Motor neuron (in vitro differentiated cells): ENCODE measurements at regions of chrX and their contacts with region 1.

Region 1: DNA sequence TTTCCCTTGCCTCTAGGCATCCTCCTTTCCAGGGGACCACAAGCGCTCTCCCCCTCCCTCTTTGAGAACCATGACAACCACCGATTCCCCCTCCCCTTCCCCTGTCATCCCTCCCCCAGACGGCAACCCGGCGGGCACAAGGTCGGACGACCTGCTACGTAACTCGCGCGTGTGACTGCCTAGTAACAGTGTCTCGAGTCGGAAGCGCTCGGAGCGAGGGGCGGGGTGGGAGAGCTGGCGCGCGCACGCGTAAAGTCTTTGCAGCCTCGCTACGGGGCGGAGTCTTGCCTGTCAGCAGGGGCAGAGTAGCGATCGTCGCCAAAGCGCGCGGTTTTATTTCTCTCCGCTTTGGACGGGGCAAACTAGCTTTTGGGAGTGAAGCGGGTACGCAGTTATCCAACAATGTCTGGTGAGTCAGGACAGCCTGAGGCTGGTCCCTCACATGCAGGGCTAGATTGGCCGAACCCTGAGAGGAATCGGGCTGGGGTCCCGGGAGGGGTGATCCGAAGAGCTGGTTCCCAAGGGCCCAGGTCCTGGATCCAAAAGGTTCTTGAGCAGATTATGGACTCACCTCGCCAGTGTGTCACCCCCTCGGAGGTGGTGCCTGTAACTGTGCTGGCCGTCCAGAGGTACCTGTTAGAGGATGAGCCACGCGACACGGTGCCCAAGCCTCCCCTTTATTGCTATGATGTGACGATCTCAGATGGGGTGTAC is at the start of gene RADX:
- ATAC-seq: peak; percentile 90 to 97 (median 96)
- H3K4me3 ChIP-seq: peak within 1 kb of the TSS; percentile 46 to 68 (median 55)
- H3K27ac ChIP-seq: no peak within 1 kb of the TSS
- H3K4me1 ChIP-seq: no peaks in the 10 kb centered on the region
- total RNA-seq, gene RADX: 5.8 to 173 (median 12.7) TPM

Region 2: DNA sequence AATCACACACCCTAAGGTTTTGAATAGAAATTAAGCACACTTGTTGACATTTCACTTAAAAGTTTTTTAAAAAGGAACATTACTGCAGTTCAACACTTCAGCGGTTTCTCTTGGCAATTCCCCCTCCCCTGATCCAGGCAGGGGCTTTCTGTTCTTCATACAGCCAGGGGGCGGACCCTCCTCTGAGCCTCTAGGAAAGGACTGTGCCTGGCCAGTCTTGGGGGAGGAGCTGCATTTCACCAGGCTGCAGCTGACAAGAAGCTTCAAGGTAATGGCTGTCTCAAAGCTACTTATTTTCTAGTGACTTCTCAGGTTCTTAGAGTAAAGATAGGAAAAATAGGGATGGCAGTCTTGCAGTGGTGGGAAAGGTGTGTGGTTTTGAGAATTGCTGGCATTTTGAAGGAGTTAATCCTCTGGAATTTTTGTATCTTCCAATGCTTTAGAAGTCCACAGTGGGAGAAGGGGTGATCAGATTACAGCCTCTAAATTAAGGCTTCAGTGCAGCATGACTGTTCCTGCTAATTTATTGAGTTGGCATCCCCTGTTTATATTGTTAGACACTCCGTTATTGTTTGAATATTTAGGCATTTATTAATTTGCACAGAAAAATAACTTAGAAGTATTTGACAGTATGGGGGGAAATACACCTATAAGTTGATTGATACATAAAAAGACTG is 410.2 kb before region 1 on chrX:
- in situ Hi-C with region 1: no loop called
- ATAC-seq: peak in 4 of 8 experiments; percentile 40 to 64 (median 56)
- H3K4me3 ChIP-seq: no peak overlapping the region
- H3K27ac ChIP-seq: no peak overlapping the region
- H3K4me1 ChIP-seq: no peaks in the 10 kb centered on the region

Region 3: GRCh38 chrX:106415276-106415895 is 196.4 kb before region 1 on chrX:
- in situ Hi-C with region 1: no loop called
- ATAC-seq: peak in 3 of 8 experiments; percentile 16 to 42 (median 33)
- H3K4me3 ChIP-seq: no peak overlapping the region
- H3K27ac ChIP-seq: no peak overlapping the region
- H3K4me1 ChIP-seq: no peaks in the 10 kb centered on the region

Region 4: GRCh38 chrX:106481341-106481740 is 130.5 kb before region 1 on chrX:
- in situ Hi-C with region 1: loop called in 1 of 9 experiments (anchors 25 kb)
- ATAC-seq: peak; percentile 40 to 99 (median 64)
- H3K4me3 ChIP-seq: no peak overlapping the region
- H3K27ac ChIP-seq: no peak overlapping the region
- H3K4me1 ChIP-seq: no peaks in the 10 kb centered on the region

Region 5: DNA sequence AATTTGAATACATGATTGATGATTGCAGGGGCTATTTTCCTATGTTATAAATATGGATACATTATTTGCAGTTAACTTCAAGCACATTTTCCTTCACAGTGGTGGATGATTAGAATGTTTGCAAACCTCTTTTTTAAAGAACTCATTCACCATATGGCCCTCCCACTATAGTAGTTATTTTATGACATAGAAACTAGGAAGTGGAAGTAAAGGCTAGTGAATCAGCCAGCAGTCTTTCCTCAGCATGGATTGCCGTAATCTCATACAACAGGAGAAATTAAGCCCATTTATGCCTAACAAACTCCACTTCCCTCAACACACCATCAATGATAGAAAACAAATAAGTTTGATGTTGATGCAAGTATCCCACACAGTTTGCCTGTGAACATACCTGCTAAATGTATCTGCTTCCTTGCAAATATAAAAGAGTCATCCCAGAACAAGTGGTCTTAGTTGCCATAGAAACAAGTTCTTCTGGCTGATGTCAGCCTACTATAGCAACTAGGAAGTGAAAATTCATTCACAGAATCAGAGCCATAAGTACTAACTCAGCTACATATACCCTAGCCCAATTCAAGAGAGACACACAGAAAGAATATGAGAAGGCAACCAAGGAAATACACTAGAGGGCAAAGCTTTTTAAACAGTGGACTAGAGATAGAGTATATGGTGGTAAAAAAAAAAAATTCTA is 101.0 kb before region 1 on chrX:
- in situ Hi-C with region 1: loop called in 1 of 9 experiments (anchors 25 kb)
- ATAC-seq: peak in 2 of 8 experiments; percentile 25 to 44
- H3K4me3 ChIP-seq: no peak overlapping the region
- H3K27ac ChIP-seq: no peak overlapping the region
- H3K4me1 ChIP-seq: no peaks in the 10 kb centered on the region

Region 6: GRCh38 chrX:106999002-106999975 is 387.5 kb after region 1 on chrX:
- in situ Hi-C with region 1: no loop called
- ATAC-seq: peak; percentile 32 to 59 (median 48)
- H3K4me3 ChIP-seq: peak overlapping the region; percentile 45 to 65 (median 53)
- H3K27ac ChIP-seq: peak overlapping the region in 1 of 2 donors; percentile 12
- H3K4me1 ChIP-seq: peaks cover 0 to 4% of the 10 kb centered on the region in 2 donors